ENCODE measurements at regions of chr15 and their contacts with region 1.

Region 1: GRCh38 chr15:47293466-47294162 is 423.7 kb upstream of the SEMA6D start:
- DNase-seq: no peak
- ATAC-seq: no peak
- H3K4me3 ChIP-seq: no peak overlapping the region
- H3K27ac ChIP-seq: no peak overlapping the region
- H3K4me1 ChIP-seq: no peaks in the 10 kb centered on the region
- H3K27me3 ChIP-seq: 0 out of 2 replicates have a peak, but pooled peaks cover 3% of the 10 kb centered on the region
- CTCF ChIP-seq: no peak

Region 2: DNA sequence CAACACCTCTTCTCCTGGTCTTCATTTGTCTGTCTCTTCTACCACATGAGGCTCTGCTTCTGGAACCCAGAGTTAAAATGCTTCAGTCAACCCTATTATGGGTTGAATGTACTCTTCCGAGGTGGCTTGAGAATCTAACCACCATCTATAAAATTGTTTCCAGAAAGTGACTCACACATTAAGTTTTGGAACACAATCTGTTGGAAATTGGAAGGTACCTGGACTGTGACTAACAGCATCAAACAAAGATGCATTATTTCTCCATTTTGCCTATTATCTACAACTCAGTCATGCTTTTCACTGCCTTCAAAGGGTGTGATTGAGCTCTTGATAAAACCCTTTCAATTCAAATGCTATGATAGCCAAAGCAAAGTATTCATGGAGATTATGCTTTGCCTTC is 75.3 kb before region 1 on chr15:
- CTCF ChIA-PET with region 1: no interaction called
- POLR2A ChIA-PET with region 1: interaction called, 10 read pairs
- intact Hi-C with region 1: no loop called
- DNase-seq: peak; percentile 51
- ATAC-seq: peak; percentile 79
- H3K4me3 ChIP-seq: no peak overlapping the region
- H3K27ac ChIP-seq: no peak overlapping the region
- H3K4me1 ChIP-seq: no peaks in the 10 kb centered on the region
- H3K27me3 ChIP-seq: no peaks in the 10 kb centered on the region
- CTCF ChIP-seq: no peak

Region 3: DNA sequence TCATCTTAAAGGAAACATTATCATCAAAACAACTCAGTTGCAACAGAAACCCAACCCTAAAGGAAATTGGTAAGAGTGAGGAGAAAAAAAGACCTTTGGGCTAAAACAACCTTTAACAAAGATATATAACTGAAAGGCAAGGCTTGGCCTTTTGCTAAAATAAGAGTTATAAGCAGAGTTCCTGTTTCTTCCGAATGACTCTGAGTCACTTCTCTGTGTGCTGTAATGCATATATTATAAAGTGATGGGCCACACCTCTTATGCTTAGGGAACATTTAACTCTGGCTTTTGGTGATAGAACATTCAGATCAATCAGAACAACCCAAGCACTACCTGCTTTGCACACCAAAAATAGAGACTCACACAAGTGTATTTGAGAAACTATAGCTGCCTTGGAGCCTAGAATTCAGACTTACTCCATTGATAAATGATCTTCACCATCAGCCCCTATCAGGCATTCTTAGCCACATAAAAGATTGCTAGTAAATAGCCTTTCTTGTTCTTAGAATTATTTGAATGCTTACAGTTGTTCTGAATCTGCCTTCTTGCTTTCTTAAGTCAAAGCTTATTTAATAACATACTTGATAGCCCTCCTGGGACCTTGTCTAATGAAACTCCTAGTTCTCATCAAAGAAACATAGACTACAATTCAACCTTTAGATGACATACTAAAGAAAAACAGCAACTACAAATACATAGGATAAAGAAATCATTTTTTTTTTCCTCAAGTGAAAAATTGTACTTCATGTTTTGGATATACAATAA is 129.5 kb after region 1 on chr15:
- CTCF ChIA-PET with region 1: no interaction called
- POLR2A ChIA-PET with region 1: no interaction called
- intact Hi-C with region 1: loop called (anchors 5 kb)
- DNase-seq: peak; percentile 19
- ATAC-seq: peak; percentile 97
- H3K4me3 ChIP-seq: no peak overlapping the region
- H3K27ac ChIP-seq: peak overlapping the region; percentile 8; the same call in 1 of the 2 replicates
- H3K4me1 ChIP-seq: peaks cover 15% of the 10 kb centered on the region
- H3K27me3 ChIP-seq: no peaks in the 10 kb centered on the region
- CTCF ChIP-seq: no peak

Region 4: DNA sequence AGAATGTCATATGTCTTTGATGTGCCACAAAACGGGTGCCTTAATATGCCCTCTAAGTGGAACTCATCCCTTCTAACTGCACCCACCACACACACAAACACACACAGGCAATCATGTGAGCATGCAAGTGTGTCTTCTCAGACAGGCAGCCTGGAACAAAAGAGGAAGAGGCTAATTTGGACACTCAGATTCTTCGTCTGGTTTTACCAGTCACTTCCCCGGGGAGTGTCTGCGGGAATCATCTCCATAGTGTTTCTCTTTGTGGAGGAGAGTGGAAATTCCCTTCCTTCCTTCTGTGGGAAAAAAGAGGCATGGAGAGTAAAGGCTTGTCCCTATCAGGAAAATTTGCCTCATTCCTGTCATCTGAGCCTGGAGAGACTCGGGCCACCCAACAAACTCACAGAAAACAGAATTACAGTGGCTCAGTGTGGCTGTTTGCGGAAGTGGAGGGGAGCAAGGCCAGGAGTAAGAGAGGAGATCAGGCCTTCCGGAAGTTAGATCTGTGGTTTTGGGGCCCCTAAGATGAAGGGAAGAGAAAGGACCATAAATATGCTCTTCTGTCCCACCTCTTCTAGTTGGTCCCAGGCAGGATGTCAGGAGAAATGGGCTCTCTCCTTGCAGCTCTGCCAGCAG is 211.1 kb after region 1 on chr15:
- CTCF ChIA-PET with region 1: no interaction called
- POLR2A ChIA-PET with region 1: no interaction called
- intact Hi-C with region 1: no loop called
- DNase-seq: no peak
- ATAC-seq: no peak
- H3K4me3 ChIP-seq: no peak overlapping the region
- H3K27ac ChIP-seq: no peak overlapping the region
- H3K4me1 ChIP-seq: no peaks in the 10 kb centered on the region
- H3K27me3 ChIP-seq: no peaks in the 10 kb centered on the region
- CTCF ChIP-seq: no peak